ENCODE measurements at regions of chr4 and their contacts with region 1.

Region 1: DNA sequence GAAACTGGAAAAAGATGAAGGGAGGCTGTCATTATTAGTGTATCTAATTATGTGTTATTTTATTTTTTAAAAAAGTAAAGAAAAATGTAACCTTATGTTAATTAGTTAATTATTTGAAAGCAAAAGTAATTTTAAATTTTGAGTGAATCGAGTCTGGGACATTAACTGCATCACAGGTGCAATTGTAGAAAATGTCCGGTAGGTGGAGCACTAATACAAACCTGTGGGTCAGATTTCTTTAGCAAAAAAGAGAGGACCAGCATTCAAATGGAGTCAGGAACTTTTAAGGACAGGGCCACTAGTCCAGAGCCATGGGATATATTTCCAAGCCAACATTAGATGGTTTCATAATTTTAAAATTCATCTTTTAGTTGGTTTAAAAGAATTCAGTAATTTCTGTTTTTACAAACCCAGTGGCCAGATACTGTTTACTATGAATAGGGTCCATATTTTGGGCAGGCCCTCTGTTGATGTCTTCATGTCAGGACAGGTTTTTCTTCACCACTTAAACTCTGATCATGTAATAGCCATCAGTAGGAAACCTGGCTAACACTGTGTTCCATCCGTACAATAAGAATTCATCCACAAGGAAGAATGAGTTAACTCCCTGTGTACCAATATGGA is 27.2 kb downstream of the BST1 start:
- DNase-seq: no peak
- H3K4me3 Mint-ChIP-seq: no peak overlapping the region
- H3K27ac Mint-ChIP-seq: no peak overlapping the region
- H3K4me1 Mint-ChIP-seq: peaks cover 21% of the 10 kb centered on the region
- H3K27me3 Mint-ChIP-seq: peaks cover 8% of the 10 kb centered on the region

Region 2: DNA sequence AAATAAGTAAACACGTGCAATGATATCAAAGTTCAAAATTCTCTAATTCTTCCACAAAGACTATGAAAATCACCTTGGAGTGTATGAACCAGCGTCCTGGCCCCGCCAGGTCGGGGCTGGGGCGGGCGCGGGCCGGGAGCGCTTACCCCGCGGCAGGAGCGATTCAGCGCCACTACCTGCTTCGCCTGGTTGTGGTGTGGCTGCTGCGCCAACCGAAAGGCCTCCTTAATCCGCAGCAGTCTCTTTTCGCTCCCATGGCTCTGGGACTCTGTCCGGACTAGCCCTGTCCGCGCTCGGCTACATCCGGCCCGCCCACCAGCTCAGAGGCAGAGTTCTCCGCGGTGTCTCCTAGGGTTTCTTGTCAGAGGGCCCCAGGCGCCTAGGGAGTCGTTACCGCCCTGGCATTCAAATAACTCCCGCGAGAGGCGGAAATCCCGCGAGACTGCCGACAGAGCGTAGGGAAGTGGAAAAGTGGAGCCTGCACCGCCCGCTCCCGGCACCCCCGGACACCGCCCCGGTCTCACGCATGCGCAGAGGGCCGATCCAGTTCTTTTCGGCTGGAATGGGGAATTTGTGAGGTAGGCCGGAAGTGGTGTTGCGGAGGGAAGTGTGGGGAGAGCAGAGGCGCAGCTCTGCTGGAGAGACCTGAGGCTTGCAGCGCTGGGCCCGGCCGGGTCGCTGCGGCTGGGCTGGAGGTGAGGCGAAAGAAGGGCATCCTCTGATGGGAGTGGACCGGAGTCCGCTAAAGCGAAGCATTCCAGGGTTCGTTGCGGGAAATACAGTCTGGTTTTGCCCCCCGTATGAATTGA is 48.6 kb before region 1 on chr4 and contains the start of gene FAM200B:
- intact Hi-C with region 1: no loop called
- DNase-seq: peak; percentile 97
- H3K4me3 Mint-ChIP-seq: peak within 1 kb of the TSS; percentile 99
- H3K27ac Mint-ChIP-seq: peak within 1 kb of the TSS; percentile 94
- H3K4me1 Mint-ChIP-seq: peaks cover 34% of the 10 kb centered on the region
- H3K27me3 Mint-ChIP-seq: no peaks in the 10 kb centered on the region
- total RNA-seq, gene FAM200B: 5.6 and 6.8 TPM in 2 replicates

Region 3: DNA sequence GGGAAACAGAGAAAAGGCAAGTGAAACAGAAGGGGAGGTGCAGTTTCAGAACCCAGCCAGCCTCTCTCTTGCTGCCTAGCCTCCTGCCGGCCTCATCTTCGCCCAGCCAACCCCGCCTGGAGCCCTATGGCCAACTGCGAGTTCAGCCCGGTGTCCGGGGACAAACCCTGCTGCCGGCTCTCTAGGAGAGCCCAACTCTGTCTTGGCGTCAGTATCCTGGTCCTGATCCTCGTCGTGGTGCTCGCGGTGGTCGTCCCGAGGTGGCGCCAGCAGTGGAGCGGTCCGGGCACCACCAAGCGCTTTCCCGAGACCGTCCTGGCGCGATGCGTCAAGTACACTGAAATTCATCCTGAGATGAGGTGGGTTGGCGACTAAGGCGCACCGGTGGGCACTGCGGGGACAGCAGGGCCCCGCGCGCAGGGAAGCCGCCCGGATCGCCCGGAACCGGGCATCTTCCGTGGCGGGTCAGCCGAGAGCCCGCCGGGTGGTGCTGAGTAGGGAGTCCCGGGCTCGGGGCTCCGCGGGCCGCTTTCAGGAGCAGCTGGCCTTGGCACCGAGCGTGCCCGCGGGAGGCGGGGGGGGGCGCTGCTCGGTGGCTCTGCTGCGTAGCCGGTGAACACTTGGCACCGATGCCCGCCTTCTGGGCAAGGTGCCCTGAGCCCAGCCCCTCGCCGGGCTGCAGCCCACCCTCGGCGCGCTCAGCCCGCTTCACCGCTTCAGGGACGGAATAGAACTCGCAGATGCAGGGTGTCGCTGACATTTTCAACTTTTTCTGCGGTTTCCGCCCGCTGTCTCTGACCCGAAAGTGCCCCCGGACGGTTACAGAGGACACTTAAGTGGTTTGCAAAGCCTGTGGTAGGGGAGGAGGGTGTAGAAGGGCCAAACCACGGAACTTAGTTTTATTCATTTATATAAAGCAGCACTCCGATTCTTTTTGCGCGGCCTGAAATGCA is 48.5 kb after region 1 on chr4 and contains the start of gene CD38:
- intact Hi-C with region 1: loop called (anchors 1 kb)
- DNase-seq: peak; percentile 65
- H3K4me3 Mint-ChIP-seq: peak within 1 kb of the TSS; percentile 93
- H3K27ac Mint-ChIP-seq: peak within 1 kb of the TSS; percentile 91
- H3K4me1 Mint-ChIP-seq: peaks cover 69% of the 10 kb centered on the region
- H3K27me3 Mint-ChIP-seq: no peaks in the 10 kb centered on the region
- total RNA-seq, gene CD38: 75.3 and 87.1 TPM in 2 replicates

Region 4: GRCh38 chr4:15805583-15806517 is 75.8 kb after region 1 on chr4:
- intact Hi-C with region 1: loop called (anchors 1 kb)
- DNase-seq: no peak
- H3K4me3 Mint-ChIP-seq: no peak overlapping the region
- H3K27ac Mint-ChIP-seq: peak overlapping the region; percentile 1
- H3K4me1 Mint-ChIP-seq: peaks cover 66% of the 10 kb centered on the region
- H3K27me3 Mint-ChIP-seq: no peaks in the 10 kb centered on the region

Region 5: GRCh38 chr4:15882675-15883086 is 152.7 kb after region 1 on chr4:
- intact Hi-C with region 1: loop called (anchors 5 kb)
- DNase-seq: peak; percentile 30
- H3K4me3 Mint-ChIP-seq: no peak overlapping the region
- H3K27ac Mint-ChIP-seq: no peak overlapping the region
- H3K4me1 Mint-ChIP-seq: peaks cover 1% of the 10 kb centered on the region
- H3K27me3 Mint-ChIP-seq: peaks cover 26% of the 10 kb centered on the region

Region 6: GRCh38 chr4:15956179-15956850 is 226.3 kb after region 1 on chr4:
- intact Hi-C with region 1: loop called (anchors 1 kb)
- DNase-seq: peak; percentile 68
- H3K4me3 Mint-ChIP-seq: no peak overlapping the region
- H3K27ac Mint-ChIP-seq: no peak overlapping the region
- H3K4me1 Mint-ChIP-seq: peaks cover 6% of the 10 kb centered on the region
- H3K27me3 Mint-ChIP-seq: peaks cover 14% of the 10 kb centered on the region

Region 7: DNA sequence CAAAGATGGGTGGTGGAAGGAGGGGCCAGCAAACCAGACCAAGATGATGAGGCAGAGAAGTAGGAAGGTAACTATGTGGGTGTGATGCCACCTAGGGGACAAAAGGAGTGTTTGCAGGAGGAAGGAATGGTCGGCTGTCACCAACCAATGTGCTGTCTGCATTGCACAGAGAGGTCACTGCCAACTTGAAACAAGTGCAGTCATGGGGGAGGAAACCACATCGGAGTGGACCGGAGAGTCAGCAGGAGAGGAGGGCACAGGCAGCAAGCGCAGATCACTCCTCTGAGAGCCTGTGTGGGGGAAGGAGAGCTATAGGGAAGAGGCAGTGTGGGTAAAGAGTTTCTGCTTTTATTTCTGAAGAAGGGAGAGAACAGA is 271.4 kb after region 1 on chr4:
- intact Hi-C with region 1: loop called (anchors 5 kb)
- DNase-seq: peak; percentile 34
- H3K4me3 Mint-ChIP-seq: no peak overlapping the region
- H3K27ac Mint-ChIP-seq: no peak overlapping the region
- H3K4me1 Mint-ChIP-seq: no peaks in the 10 kb centered on the region
- H3K27me3 Mint-ChIP-seq: peaks cover 7% of the 10 kb centered on the region

Measured in activated T-helper 2 cell treated with anti-CD3 and anti-CD28 coated beads, Interferon-gamma antibody, Interleukin-2, Interleukin-4, amounts not matched to agents 10 μg/mL and 5 μg/mL and 100 μg/mL, durations not matched to agents 14 hours and 24 hours and 36 hours (primary cell).